A673 (cell line): ENCODE measurements at regions of chr1 and their contacts with region 1.

Region 1: GRCh38 chr1:163174524-163175437 is 27.9 kb downstream of the RGS5 start:
- DNase-seq: peak; percentile 94
- H3K4me3 ChIP-seq: peak overlapping the region; percentile 13
- H3K27ac ChIP-seq: peak overlapping the region; percentile 80
- H3K4me1 ChIP-seq: peaks cover 72% of the 10 kb centered on the region
- H3K27me3 ChIP-seq: no peaks in the 10 kb centered on the region
- CTCF ChIP-seq: peak; percentile 94

Region 2: DNA sequence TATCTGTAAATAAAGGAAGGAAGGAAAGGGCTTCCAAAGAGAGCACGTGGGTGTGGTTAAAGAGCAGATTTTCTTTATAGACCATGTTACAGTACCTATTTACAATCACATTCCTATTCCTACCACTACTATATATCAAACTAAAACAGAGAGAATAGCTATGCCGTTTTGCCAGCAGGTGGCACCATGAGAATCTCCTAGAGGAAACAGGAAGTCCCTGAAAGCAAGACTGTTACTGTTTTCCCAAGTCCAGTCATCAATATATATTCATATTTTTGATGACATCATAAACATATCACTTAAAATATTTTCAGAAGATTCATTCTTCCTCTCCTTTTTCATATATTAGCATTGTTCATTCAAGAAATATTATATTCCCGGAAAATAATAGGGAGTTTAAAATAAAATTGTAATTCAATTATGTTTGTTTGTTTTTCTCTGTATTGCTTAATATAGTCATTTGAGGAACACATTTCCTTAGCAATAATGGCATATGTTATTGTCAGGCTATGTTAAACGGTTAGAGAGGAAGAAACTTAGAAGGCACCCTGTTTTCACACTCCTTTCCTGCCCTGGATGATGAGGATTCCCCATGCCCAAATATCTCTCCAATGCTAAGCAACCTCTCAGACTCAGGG is 320.4 kb before region 1 on chr1:
- CTCF ChIA-PET with region 1: no interaction called
- POLR2A ChIA-PET with region 1: no interaction called
- intact Hi-C with region 1: loop called (anchors 2 kb)
- DNase-seq: peak; percentile 88
- H3K4me3 ChIP-seq: no peak overlapping the region
- H3K27ac ChIP-seq: peak overlapping the region; percentile 43
- H3K4me1 ChIP-seq: peaks cover 25% of the 10 kb centered on the region
- H3K27me3 ChIP-seq: no peaks in the 10 kb centered on the region
- CTCF ChIP-seq: peak; percentile 95

Region 3: GRCh38 chr1:163071405-163072255 is 103.2 kb before region 1 on chr1:
- CTCF ChIA-PET with region 1: interaction called, 8 read pairs
- POLR2A ChIA-PET with region 1: no interaction called
- intact Hi-C with region 1: loop called (anchors 1 kb)
- DNase-seq: peak; percentile 90
- H3K4me3 ChIP-seq: peak overlapping the region; percentile 40
- H3K27ac ChIP-seq: peak overlapping the region; percentile 10
- H3K4me1 ChIP-seq: peaks cover 47% of the 10 kb centered on the region
- H3K27me3 ChIP-seq: no peaks in the 10 kb centered on the region
- CTCF ChIP-seq: peak; percentile 77

Region 4: DNA sequence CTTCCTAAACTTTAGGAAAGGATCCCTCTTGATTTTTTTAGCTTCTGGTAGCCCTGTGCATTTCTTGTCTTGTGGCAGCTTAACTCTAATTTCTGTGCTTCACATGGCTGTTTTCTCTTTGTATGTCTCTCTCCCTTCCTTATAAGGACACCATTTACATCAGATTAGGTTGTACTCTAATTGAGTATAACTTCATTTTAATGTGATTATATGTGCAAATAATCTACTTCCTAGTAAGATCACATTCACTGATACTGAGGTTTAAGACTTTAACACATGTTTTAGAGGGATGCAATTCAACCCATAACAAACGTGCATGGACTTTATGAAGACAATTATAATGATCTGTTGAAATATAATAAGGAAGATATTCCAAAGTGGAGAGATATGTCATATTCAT is 58.9 kb before region 1 on chr1:
- CTCF ChIA-PET with region 1: no interaction called
- POLR2A ChIA-PET with region 1: no interaction called
- intact Hi-C with region 1: loop called (anchors 2 kb)
- DNase-seq: peak; percentile 70
- H3K4me3 ChIP-seq: peak overlapping the region; percentile 27
- H3K27ac ChIP-seq: peak overlapping the region; percentile 82
- H3K4me1 ChIP-seq: peaks cover 19% of the 10 kb centered on the region
- H3K27me3 ChIP-seq: no peaks in the 10 kb centered on the region
- CTCF ChIP-seq: no peak

Region 5: GRCh38 chr1:163388970-163389369 is 214.2 kb after region 1 on chr1:
- CTCF ChIA-PET with region 1: no interaction called
- POLR2A ChIA-PET with region 1: no interaction called
- intact Hi-C with region 1: no loop called
- DNase-seq: no peak
- H3K4me3 ChIP-seq: no peak overlapping the region
- H3K27ac ChIP-seq: no peak overlapping the region
- H3K4me1 ChIP-seq: no peaks in the 10 kb centered on the region
- H3K27me3 ChIP-seq: no peaks in the 10 kb centered on the region
- CTCF ChIP-seq: no peak